Cardiac septum (tissue), 1 donor: ENCODE measurements at regions of chr17 and their contacts with region 1.

Region 1: DNA sequence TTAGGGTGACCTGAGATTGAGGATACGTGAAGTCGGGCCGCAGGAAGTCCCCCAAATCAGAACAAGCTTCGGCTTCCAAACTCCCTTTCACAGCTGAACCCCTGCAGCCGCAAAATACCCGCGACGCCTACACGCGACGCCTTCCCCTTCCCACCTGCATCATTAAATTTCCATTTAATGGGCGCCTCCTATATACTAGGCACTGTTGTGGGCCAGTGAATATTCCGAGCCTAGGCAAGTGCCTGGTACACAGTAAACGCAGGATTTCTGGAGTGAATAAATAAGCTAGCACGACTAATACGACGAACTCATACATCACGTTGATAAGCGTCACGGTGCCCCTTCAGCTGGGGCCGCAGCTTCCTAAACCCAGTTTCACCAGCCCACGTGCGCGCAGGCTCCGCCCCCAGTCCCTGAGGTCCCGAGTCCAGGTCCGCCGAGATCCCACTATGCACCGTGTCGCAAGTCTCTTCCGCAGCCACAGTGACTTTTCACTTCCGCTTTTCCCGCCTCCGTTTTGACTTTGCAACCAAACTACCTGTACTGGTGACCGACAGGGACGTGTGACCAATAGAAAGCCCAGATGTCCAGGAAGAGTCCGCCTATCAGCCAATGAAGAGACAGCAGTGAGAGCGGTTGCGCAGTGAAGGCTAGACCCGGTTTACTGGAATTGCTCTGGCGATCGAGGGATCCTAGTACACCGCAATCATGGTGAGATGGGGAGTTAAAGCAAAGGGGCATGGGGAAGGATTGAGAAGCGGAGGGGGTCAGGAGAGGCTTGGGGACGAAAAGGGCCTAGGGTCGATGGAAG is at the start of gene PSMB3:
- DNase-seq: peak; percentile 99
- total RNA-seq, gene PSMB3: 141 TPM

Region 2: DNA sequence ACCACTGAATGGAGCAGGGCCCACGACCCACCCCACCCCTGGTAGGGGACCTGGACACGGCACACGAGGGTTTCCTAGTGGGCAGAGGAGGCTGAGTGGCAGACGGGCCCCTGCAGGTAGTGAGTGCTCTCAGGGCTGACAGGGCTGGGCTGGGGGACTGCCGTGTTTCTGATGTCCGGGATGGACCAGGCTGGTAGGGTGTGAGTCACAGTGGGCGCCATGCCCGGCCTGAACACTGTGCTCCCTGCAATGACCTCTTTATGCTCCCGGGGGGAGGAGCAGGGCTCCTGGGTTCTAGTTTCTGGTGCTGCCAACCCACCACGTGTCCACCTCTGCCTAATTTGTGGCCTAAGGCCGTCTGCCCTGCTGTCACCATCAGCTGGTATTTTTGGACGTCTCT is 297.8 kb before region 1 on chr17:
- intact Hi-C with region 1: loop called (anchors 5 kb)
- DNase-seq: peak; percentile 92

Region 3: GRCh38 chr17:38690386-38690785 is 61.9 kb before region 1 on chr17:
- intact Hi-C with region 1: no loop called
- DNase-seq: no peak

Region 4: GRCh38 chr17:38702166-38702899 is 50.0 kb before region 1 on chr17:
- intact Hi-C with region 1: loop called (anchors 2 kb)
- DNase-seq: peak; percentile 94

Region 5: DNA sequence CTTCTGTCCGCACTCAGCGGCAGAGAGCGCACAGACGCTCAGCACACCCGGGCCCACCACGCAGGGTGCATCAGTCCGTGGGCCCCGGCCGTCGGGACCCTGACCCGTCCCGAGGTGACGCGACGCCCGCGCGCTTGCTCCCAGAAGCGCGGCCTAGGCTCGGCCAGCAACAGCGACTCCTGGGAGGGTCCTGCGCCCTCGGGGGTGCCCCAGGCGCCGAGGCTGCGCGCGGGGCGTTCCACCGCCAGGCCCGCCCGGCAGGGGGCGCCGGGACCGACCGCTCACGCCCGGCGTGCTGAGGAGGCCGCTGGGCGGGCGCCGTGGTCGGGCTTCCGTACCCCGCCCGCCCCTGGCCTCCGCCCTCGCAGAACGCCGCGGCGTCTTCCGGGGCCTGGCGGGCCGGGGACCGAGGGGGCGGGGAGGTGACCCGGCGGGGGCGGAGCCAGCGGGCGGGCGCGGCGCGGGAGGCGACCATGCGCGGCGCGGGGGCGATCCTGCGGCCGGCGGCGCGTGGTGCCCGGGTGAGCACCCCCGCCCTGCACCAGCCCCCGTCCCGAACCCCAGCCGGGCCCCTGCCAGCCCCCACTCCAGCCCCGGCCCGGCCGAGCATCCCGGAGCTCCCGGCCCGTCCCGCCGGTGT is 22.3 kb before region 1 on chr17 and contains the start of gene CISD3:
- intact Hi-C with region 1: loop called (anchors 2 kb)
- DNase-seq: peak; percentile 94
- total RNA-seq, gene CISD3: 67.1 TPM

Region 6: GRCh38 chr17:38799378-38800236 is 47.3 kb after region 1 on chr17 and contains the start of gene PIP4K2B:
- intact Hi-C with region 1: loop called (anchors 2 kb)
- DNase-seq: peak; percentile 96
- total RNA-seq, gene PIP4K2B: 48.4 TPM